Dorsolateral prefrontal cortex (tissue), 120 donors: ENCODE measurements at regions of chr2 and their contacts with region 1.

Region 1: GRCh38 chr2:54330162-54330925 is 74.3 kb upstream of the TSPYL6 start:
- DNase-seq: peak; percentile 94 to 98 (median 97)
- H3K4me3 ChIP-seq: peak overlapping the region; percentile 53 to 85 (median 72)
- H3K27ac ChIP-seq: peak overlapping the region; percentile 70 to 100 (median 96)
- H3K27me3 ChIP-seq: no peaks in the 10 kb centered on the region
- CTCF ChIP-seq: peak in 15 of 56 donors; percentile 9 to 47 (median 27)

Region 2: DNA sequence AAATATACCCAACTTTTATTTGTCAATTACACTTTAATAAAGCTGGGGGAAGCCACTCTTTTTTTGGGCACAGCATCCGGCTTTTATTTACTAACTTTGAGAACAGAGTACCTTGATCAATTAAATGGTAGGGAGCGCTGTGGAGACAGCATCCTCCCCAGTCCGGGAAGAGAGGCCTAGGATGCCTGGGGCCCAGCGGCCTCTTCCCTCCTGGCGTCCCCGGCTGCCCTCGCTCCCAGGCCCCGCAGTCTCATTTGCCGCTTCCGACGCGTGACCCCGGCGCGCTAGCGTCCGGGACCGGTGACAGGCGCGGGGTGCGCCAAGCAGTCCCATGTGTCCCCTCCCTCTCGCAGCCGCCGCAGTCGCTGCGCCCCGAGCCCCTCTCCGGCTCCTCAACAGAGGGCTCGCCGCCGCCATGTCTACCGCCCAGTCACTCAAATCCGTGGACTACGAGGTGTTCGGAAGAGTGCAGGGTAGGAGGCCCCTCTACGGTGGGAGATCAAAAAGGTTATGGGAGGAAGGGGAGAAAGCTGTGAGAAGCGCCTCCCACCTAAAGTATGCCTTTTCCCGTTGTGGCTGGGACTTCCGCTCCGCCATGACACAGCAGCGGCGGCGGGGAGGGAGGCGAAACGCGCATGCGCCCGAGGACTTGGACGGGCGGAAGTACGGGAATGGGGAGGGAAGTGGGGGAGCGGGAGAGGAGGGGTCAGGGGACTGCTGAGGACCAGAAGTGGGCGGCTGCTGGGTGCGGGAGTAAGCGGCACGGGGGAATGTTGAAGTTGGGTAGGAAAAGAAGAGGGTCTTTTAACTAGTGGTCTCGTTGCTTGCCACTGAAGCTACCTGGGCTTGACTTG is 214.8 kb before region 1 on chr2 and contains the start of gene ACYP2:
- intact Hi-C with region 1: loop called in 1 of 2 experiments (anchors 10 kb)
- DNase-seq: peak; percentile 86 to 95 (median 92)
- H3K4me3 ChIP-seq: peak within 1 kb of the TSS; percentile 59 to 93 (median 80)
- H3K27ac ChIP-seq: peak within 1 kb of the TSS; percentile 94 to 100 (median 100)
- H3K27me3 ChIP-seq: no peaks in the 10 kb centered on the region
- CTCF ChIP-seq: peak in 42 of 56 donors; percentile 7 to 53 (median 32)
- total RNA-seq, gene ACYP2: 51.6 to 88.2 (median 68.5) TPM

Region 3: DNA sequence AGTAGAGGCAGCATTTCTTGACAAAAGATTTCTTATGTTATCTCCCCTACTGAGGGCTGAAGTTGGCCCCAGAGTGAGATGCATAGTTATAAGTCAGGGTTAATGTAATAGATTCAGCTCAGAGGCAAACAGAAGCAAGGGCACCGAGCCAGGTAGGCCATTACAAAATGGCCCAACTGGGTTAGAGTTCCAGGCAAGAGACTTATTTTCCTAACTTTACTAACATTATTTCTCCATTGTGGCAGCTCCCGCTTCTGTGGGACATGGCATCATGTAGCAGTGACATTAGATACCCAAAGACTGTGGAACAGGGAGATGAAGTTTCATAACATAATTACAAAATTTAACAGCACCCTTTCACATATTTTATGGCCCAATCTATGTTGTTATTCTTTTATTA is 101.4 kb before region 1 on chr2:
- intact Hi-C with region 1: loop called in 1 of 2 experiments (anchors 5 kb)
- DNase-seq: no peak
- H3K4me3 ChIP-seq: no peak overlapping the region
- H3K27ac ChIP-seq: peak overlapping the region in 3 of 59 donors; percentile 17 to 52 (median 26)
- H3K27me3 ChIP-seq: no peaks in the 10 kb centered on the region
- CTCF ChIP-seq: no peak

Region 4: GRCh38 chr2:54455563-54456361 is 125.4 kb after region 1 on chr2 and contains the start of gene SPTBN1:
- intact Hi-C with region 1: loop called (anchors 2 kb)
- DNase-seq: peak; percentile 86 to 96 (median 93)
- H3K4me3 ChIP-seq: peak within 1 kb of the TSS; percentile 65 to 97 (median 82)
- H3K27ac ChIP-seq: peak within 1 kb of the TSS; percentile 94 to 100 (median 99)
- H3K27me3 ChIP-seq: no peaks in the 10 kb centered on the region
- CTCF ChIP-seq: peak in 23 of 56 donors; percentile 1 to 44 (median 16)
- total RNA-seq, gene SPTBN1: 567 to 884 (median 665) TPM

Region 5: GRCh38 chr2:54673501-54673998 is 343.2 kb after region 1 on chr2:
- intact Hi-C with region 1: loop called (anchors 5 to 10 kb)
- DNase-seq: peak in 1 of 10 donors; percentile 50
- H3K4me3 ChIP-seq: peak overlapping the region in 6 of 59 donors; percentile 4 to 28 (median 14)
- H3K27ac ChIP-seq: peak overlapping the region; percentile 24 to 96 (median 82)
- H3K27me3 ChIP-seq: no peaks in the 10 kb centered on the region
- CTCF ChIP-seq: no peak